ENCODE measurements at regions of chr5 and their contacts with region 1.

Region 1: DNA sequence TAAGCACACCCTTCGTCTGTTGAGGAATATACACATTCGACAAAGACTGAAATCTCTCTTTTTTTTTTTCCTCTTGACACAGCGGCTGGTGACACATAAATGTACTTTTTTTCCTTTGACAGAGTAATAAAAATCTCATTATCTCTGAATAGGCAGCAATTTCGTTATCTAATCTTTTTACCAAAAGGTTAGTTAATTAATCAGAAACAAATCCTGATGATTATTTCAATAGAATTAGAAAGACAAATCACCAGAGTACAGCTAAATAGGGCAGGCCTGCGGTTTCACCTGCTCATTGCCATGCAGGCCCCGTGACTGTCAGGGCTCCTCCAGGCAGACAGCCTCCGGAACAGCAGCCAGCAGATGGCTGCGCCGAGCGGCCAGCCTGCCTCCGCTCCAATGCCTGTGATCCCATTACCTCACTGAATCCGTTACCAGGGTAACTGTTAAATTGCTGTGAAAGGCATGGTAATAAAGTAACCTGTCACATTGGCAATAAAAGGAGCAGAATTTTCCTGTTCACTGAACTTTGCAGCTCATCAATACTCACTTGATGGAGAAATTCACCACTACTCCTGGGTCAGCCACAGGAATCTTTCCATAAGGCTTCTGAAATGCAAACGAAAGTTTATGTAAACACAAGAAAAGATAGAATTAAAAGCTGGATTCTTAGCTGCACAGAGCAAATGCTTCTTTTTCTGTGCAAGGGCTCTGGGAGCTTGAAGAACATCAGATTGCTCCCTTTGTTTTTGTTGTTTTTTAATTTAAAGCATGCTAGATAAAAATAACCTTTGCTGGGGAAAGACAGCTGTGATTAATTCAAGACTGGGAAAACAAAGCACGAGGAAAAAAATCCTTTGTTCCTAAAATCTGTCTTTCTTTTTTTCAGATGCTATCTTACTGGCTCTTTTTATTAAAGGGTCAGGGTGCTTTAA is 666.4 kb upstream of the ZNF608 start:
- DNase-seq: peak; percentile 93
- H3K4me3 ChIP-seq: no peak overlapping the region
- H3K27ac ChIP-seq: peak overlapping the region; percentile 99
- H3K4me1 ChIP-seq: peaks cover 54% of the 10 kb centered on the region
- H3K27me3 ChIP-seq: no peaks in the 10 kb centered on the region
- CTCF ChIP-seq: peak; percentile 58 to 66
- POLR2A ChIP-seq: no peak

Region 2: DNA sequence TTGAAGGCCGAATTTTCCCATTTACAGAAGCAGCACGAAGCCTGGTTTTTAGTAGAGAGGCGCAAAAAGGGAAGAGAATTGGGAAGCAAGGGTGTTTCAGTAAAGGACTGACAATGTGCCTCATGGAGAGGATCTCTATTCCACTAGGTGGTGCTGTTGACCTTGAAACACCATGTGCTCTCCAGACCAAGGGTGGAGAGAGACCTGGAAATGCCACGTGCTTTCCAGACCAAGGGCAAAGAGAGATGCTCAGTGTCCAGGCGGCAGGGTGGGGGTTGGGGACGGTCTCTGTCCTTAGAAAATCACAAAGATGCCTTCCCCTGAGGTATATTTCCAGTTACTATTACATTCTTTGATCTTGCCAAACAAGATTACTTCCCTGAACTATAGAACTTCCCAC is 1475.6 kb before region 1 on chr5:
- CTCF ChIA-PET with region 1: no interaction called
- POLR2A ChIA-PET with region 1: no interaction called
- dilution Hi-C with region 1: no loop called
- intact Hi-C with region 1: loop called (anchors 1 kb)
- DNase-seq: peak; percentile 68
- H3K4me3 ChIP-seq: no peak overlapping the region
- H3K27ac ChIP-seq: no peak overlapping the region
- H3K4me1 ChIP-seq: no peaks in the 10 kb centered on the region
- H3K27me3 ChIP-seq: no peaks in the 10 kb centered on the region
- CTCF ChIP-seq: peak; percentile 51 to 62
- POLR2A ChIP-seq: no peak

Region 3: DNA sequence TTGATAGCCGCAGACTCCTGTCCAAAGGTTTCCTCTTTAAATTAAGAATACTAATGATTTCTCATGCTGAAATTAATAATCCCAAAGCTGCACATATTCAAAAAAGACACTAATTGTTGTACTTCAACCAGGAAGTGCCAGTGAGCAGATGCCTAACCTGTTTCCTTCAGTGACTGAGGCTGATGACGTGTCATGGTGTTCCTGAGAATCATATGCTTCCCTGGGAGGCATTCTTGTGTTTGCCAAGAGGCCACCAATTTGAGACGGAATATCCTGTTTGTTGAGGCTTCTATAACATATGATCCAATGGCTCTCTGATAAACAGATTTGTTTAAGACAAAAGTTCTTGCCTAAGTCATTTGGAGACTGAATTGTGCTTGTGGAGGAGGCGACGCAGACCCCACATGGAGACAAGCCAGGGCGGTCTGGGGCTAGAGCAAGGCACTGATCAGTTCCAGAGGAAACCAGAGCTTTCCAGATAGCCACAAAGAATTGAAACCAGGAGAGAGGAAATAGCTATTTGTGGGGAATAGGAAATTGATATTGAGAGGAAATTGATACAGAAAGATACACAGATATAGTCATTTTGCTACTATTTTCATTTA is 600.0 kb before region 1 on chr5:
- CTCF ChIA-PET with region 1: no interaction called
- POLR2A ChIA-PET with region 1: no interaction called
- dilution Hi-C with region 1: no loop called
- intact Hi-C with region 1: loop called (anchors 2 kb)
- DNase-seq: peak; percentile 82
- H3K4me3 ChIP-seq: no peak overlapping the region
- H3K27ac ChIP-seq: peak overlapping the region; percentile 81
- H3K4me1 ChIP-seq: peaks cover 10% of the 10 kb centered on the region
- H3K27me3 ChIP-seq: no peaks in the 10 kb centered on the region
- CTCF ChIP-seq: no peak
- POLR2A ChIP-seq: no peak

Region 4: DNA sequence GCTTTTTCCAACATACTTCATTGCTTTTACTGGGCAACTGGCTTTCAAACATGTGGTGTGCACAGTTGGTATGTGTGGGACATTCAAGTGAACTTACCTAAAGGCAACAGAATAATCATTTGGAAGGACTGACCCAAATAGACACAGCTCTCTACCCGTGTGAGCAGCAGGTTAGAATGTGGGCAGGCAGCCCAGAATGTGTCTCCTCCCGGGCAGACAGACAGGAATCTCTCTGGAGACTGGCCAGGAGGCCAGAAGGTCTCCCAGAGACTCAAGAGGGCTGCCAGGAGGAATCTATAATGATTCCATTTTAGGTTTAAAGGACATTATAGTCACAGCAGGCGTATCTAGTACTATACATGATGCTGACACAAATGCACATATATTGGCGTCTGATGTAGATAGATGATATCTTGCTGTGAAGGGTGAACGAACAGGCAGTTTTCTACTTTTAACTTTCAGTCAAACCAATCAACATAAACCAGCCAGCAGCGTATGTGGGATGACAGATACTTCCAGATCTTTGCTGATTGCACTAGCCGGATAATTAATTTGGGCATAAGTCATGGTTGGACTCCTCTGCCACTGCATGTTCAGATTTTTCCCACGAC is 368.9 kb before region 1 on chr5:
- CTCF ChIA-PET with region 1: no interaction called
- POLR2A ChIA-PET with region 1: no interaction called
- dilution Hi-C with region 1: no loop called
- intact Hi-C with region 1: loop called (anchors 2 kb)
- DNase-seq: peak; percentile 82
- H3K4me3 ChIP-seq: no peak overlapping the region
- H3K27ac ChIP-seq: peak overlapping the region; percentile 10
- H3K4me1 ChIP-seq: peaks cover 34% of the 10 kb centered on the region
- H3K27me3 ChIP-seq: no peaks in the 10 kb centered on the region
- CTCF ChIP-seq: no peak
- POLR2A ChIP-seq: no peak

Region 5: GRCh38 chr5:125277494-125278154 is 135.2 kb before region 1 on chr5:
- CTCF ChIA-PET with region 1: interaction called, 7 read pairs
- POLR2A ChIA-PET with region 1: no interaction called
- dilution Hi-C with region 1: no loop called
- intact Hi-C with region 1: loop called (anchors 1 kb)
- DNase-seq: peak; percentile 93
- H3K4me3 ChIP-seq: no peak overlapping the region
- H3K27ac ChIP-seq: peak overlapping the region; percentile 85
- H3K4me1 ChIP-seq: peaks cover 46% of the 10 kb centered on the region
- H3K27me3 ChIP-seq: no peaks in the 10 kb centered on the region
- CTCF ChIP-seq: no peak
- POLR2A ChIP-seq: no peak

Region 6: DNA sequence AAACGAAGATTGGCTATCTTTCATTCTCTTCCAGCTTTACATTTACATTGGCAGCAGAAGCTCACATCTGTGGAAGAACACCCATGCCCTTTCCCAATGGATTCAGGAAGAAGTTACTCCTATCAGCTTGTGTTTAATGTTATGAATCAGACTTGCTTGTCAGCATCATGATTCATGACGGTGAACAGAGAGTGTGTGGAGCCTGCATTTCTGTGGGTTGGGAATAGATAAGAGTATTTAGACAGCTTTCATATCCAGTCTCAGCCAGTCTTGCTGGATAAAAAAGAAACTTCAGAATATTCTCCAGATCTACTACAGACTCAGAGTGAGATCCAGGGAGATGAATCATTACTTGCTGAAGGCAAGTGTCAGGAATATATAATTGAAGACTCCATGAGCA is 146.5 kb after region 1 on chr5:
- CTCF ChIA-PET with region 1: interaction called, 16 read pairs
- POLR2A ChIA-PET with region 1: no interaction called
- dilution Hi-C with region 1: no loop called
- intact Hi-C with region 1: loop called (anchors 2 kb)
- DNase-seq: peak; percentile 99
- H3K4me3 ChIP-seq: peak overlapping the region in 1 of 3 experiments; percentile 13
- H3K27ac ChIP-seq: peak overlapping the region; percentile 51
- H3K4me1 ChIP-seq: peaks cover 17% of the 10 kb centered on the region
- H3K27me3 ChIP-seq: no peaks in the 10 kb centered on the region
- CTCF ChIP-seq: no peak
- POLR2A ChIP-seq: peak; percentile 74

Region 7: DNA sequence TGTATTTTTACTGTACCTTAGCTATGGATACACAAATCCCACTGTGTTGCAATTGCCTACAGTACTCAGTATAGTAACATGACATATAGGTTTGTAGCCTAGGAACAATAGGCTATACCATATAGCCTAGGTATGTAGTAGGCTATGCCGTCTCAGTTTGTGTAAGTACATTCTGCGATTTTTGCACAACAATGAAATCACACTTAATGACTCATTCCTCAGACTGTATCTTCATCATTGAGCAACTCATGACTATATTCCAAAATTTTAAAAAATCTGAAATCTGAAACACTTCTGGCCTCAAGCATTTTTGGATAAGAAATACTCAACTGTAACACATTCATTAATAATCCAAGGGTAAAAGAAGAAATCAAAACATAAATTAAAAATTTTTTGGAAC is 343.6 kb after region 1 on chr5:
- CTCF ChIA-PET with region 1: no interaction called
- POLR2A ChIA-PET with region 1: no interaction called
- dilution Hi-C with region 1: no loop called
- intact Hi-C with region 1: no loop called
- DNase-seq: no peak
- H3K4me3 ChIP-seq: no peak overlapping the region
- H3K27ac ChIP-seq: no peak overlapping the region
- H3K4me1 ChIP-seq: no peaks in the 10 kb centered on the region
- H3K27me3 ChIP-seq: no peaks in the 10 kb centered on the region
- CTCF ChIP-seq: no peak
- POLR2A ChIP-seq: no peak

Region 8: GRCh38 chr5:125778814-125779213 is 366.0 kb after region 1 on chr5:
- CTCF ChIA-PET with region 1: no interaction called
- POLR2A ChIA-PET with region 1: no interaction called
- dilution Hi-C with region 1: no loop called
- intact Hi-C with region 1: no loop called
- DNase-seq: no peak
- H3K4me3 ChIP-seq: no peak overlapping the region
- H3K27ac ChIP-seq: no peak overlapping the region
- H3K4me1 ChIP-seq: no peaks in the 10 kb centered on the region
- H3K27me3 ChIP-seq: no peaks in the 10 kb centered on the region
- CTCF ChIP-seq: no peak
- POLR2A ChIP-seq: no peak

Measured in endothelial cell of umbilical vein (primary cell).